ENCODE measurements at regions of chr10 and their contacts with region 1.

Region 1: DNA sequence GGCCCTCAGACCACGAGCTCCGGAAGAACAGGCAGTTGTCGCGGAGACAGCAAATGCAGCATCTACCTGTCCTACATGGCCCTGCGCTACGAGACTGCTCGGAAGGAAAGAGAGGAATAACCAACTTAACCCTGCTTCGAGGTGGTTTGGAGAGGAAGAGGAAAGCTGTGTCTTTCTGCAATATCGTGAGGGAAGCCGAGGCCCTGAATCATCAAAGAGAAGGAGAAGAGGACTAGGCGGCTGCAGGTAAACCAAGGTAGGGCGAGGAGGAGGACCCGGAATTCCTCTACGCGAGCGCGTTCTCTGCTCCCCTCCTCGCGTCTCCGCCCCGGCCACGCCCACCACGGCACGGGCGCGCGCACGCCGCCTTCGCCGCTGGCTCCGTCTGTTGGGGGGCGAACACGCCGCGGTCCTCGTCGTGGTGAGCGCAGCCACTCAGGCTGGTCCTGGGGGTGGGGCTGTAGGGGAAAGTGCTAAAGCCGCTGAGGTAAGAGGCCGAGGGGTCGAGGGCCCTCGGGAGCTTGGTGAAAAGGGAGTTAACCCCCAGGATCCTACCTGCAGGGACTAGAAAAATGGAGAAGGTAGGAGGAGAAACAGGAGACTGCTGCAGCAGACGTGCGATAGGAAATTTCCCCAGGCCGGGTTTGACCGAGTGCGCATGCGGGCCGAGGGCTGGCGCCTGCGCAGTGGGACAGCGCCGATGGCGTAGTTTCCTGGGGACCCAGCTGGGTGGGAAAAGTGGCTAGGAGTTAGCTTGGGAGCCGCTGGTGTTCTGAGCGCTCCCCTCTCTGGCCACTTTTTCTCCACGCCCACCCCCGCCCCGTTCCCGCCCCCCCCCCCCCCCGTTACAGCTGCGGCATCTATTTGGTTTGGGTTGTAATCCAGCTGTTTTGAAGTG is at the starts of genes ANAPC16 and ASCC1:
- DNase-seq: peak; percentile 99
- H3K4me3 ChIP-seq: peak within 1 kb of the TSS; percentile 52 to 83 (median 64)
- H3K27ac ChIP-seq: peak within 1 kb of the TSS; percentile 94 to 100 (median 98)
- H3K4me1 ChIP-seq: peaks cover 41 to 90% (median 64%) of the 10 kb centered on the region in 6 donors
- H3K27me3 ChIP-seq: no peaks in the 10 kb centered on the region
- CTCF ChIP-seq: peak in 1 of 11 experiments; percentile 28
- POLR2A ChIP-seq: peak; percentile 30 to 89 (median 83)
- total RNA-seq, gene ANAPC16: 70.8 to 115 (median 97.2) TPM
- total RNA-seq, gene ASCC1: 23.7 to 41.7 (median 37.9) TPM

Region 2: GRCh38 chr10:72273410-72274212 is 57.7 kb after region 1 on chr10 and contains the start of gene DDIT4:
- intact Hi-C with region 1: loop called (anchors 10 kb)
- DNase-seq: peak; percentile 100
- H3K4me3 ChIP-seq: peak within 1 kb of the TSS; percentile 82 to 98 (median 93)
- H3K27ac ChIP-seq: peak within 1 kb of the TSS; percentile 89 to 99 (median 97)
- H3K4me1 ChIP-seq: peaks cover 22 to 73% (median 46%) of the 10 kb centered on the region in 6 donors
- H3K27me3 ChIP-seq: no peaks in the 10 kb centered on the region
- CTCF ChIP-seq: peak in 2 of 11 experiments; percentile 24 to 45
- POLR2A ChIP-seq: peak; percentile 100
- total RNA-seq, gene DDIT4: 103 to 308 (median 249) TPM